ENCODE measurements at regions of chr9 and their contacts with region 1.

Region 1: DNA sequence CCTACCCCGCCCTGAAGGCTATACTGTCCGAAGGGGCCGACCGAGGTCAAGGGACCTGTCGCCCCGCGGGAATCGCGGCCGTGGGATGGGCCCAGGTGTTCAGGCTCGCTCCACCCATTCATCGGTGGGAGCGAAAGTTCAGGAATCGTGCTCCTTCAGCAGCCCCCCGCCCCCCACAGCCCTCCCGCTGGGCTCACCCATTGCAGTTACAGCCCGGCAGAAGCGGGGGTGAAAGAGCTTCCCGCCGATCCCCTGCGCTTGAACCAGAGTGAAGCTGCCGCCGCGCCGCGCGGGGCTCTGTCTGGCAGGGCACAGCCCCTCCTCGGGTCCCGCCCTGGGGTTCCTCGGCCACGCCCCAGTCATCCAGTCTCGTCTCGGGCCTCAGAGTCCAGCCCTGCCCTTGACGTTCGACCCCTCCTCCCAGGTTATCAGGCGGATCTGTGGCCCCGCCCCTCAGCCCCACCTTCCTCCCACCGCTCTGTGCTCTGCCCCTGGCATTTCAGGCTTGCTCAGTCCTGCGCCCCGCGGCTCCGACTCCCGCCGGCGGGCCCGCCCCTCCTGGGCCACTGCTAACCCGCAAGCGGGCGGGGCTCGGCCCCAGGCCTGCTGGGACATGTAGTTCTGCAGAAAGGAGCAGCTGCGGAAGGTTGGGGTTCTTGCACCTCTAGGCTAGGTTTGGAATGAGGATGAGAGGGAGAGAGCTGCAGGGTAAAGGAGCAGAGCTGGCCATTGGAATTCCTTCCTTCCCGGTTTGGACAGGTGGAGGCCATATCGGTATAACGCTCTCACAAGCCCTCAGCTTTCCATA is at the start of gene MYORG:
- DNase-seq: peak; percentile 96
- ATAC-seq: peak; percentile 91
- H3K4me3 ChIP-seq: peak within 1 kb of the TSS; percentile 39 to 56
- H3K27ac ChIP-seq: peak within 1 kb of the TSS in 1 of 2 donors; percentile 23
- H3K4me1 ChIP-seq: no peaks in the 10 kb centered on the region
- H3K27me3 ChIP-seq: no peaks in the 10 kb centered on the region
- total RNA-seq, gene MYORG: 6.1 to 9.6 TPM

Region 2: GRCh38 chr9:34328987-34329832 is 47.6 kb before region 1 on chr9 and contains the starts of genes KIF24 and NUDT2:
- intact Hi-C with region 1: loop called (anchors 1 to 2 kb)
- DNase-seq: peak; percentile 98
- ATAC-seq: peak; percentile 98
- H3K4me3 ChIP-seq: peak within 1 kb of the TSS; percentile 76 to 84
- H3K27ac ChIP-seq: peak within 1 kb of the TSS in 1 of 2 donors; percentile 93
- H3K4me1 ChIP-seq: no peaks in the 10 kb centered on the region
- H3K27me3 ChIP-seq: no peaks in the 10 kb centered on the region
- total RNA-seq, gene KIF24: 0.32 to 0.78 TPM
- total RNA-seq, gene NUDT2: 13.6 to 17.1 TPM

Region 3: GRCh38 chr9:34437006-34437925 is 60.5 kb after region 1 on chr9:
- intact Hi-C with region 1: no loop called
- DNase-seq: no peak
- ATAC-seq: no peak
- H3K4me3 ChIP-seq: no peak overlapping the region
- H3K27ac ChIP-seq: no peak overlapping the region
- H3K4me1 ChIP-seq: no peaks in the 10 kb centered on the region
- H3K27me3 ChIP-seq: no peaks in the 10 kb centered on the region

Measured in aorta (tissue), 5 donors.